CD4-positive, alpha-beta memory T cell (primary cell): ENCODE measurements at regions of chr18 and their contacts with region 1.

Region 1: GRCh38 chr18:61901323-61901986 is 8.6 kb upstream of the RNF152 start:
- DNase-seq: peak; percentile 35 to 49 (median 43)
- H3K4me3 ChIP-seq: no peak overlapping the region
- H3K4me3 Mint-ChIP-seq: no peak overlapping the region
- H3K27ac ChIP-seq: no peak overlapping the region
- H3K27ac Mint-ChIP-seq: no peak overlapping the region
- H3K4me1 ChIP-seq: no peaks in the 10 kb centered on the region
- H3K4me1 Mint-ChIP-seq: peaks cover 0 to 5% (median 2%) of the 10 kb centered on the region in 4 donors
- H3K27me3 ChIP-seq: no peaks in the 10 kb centered on the region
- H3K27me3 Mint-ChIP-seq: peaks cover 16% of the 10 kb centered on the region in 2 donors

Region 2: DNA sequence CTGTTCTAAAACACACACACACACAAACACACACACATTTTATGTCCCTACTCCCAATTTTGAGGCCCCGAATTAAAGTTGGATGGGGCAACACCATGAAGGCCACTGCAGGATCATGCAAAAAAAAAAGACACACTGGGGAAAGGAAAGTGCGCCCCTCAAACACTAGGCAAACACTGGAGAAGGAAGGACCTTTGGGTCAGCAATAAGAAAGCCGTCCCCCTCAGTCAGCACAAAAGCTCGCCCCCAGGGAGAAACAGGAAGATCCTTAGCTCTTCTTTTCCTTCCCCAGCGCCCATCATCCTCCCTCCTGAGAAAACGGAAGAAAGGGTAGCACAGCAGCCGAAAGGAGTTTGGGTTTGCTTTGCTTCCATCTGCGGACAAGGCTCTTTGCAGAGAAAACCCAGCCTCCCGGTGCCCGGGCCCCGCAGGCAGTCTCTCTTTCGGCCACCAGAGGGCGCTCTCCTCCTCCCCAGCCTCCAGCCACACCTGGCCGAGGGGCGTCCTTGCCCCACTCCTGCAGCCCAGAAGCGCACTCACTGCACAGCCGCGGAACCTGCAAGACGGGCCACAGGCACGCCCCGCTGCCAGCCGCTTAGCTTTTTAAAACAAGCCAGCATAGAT is 319.8 kb before region 1 on chr18:
- CTCF ChIA-PET with region 1: no interaction called
- POLR2A ChIA-PET with region 1: no interaction called
- intact Hi-C with region 1: loop called (anchors 2 kb)
- DNase-seq: peak; percentile 47 to 62 (median 50)
- H3K4me3 ChIP-seq: no peak overlapping the region
- H3K4me3 Mint-ChIP-seq: peak overlapping the region in 5 of 8 donors; percentile 13 to 63 (median 37)
- H3K27ac ChIP-seq: no peak overlapping the region
- H3K27ac Mint-ChIP-seq: peak overlapping the region in 2 of 7 donors; percentile 17 to 53
- H3K4me1 ChIP-seq: peaks cover 6% of the 10 kb centered on the region
- H3K4me1 Mint-ChIP-seq: peaks cover 5 to 24% (median 9%) of the 10 kb centered on the region in 4 donors
- H3K27me3 ChIP-seq: no peaks in the 10 kb centered on the region
- H3K27me3 Mint-ChIP-seq: peaks cover 34 to 42% of the 10 kb centered on the region in 2 donors

Region 3: DNA sequence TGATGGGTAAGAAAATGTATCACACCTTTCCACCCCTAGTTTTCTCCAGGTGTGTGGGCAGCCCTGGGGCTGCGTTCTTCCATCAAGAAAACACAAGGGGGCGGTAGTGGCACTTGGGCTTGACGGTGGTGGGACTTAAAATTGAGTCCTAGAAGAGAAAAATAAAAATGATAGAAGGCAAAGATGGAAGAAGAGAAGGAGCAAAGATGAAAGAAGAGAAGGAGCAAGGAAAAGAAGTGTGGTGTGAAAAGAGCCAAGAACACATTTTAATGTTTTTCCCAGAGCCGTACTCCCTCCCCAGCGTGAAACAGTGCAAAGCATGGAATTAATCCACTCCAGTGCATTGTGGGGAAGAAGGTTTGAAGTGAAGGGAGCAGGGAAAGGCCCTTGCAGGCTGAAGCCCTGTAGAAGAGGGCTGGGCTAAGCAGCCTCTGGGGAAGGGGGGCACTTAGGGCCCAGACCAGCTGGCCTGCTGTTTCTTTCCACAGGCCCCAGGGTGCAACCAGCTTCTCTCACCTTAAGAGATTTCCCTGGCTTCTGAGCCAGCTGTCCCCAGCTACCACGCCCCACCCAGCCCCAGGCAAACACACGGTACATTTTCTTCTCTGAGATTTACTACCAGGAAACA is 265.4 kb before region 1 on chr18:
- CTCF ChIA-PET with region 1: interaction called, 5 read pairs
- POLR2A ChIA-PET with region 1: no interaction called
- intact Hi-C with region 1: loop called (anchors 1 kb)
- DNase-seq: peak in 4 of 5 donors; percentile 26 to 41 (median 34)
- H3K4me3 ChIP-seq: no peak overlapping the region
- H3K4me3 Mint-ChIP-seq: no peak overlapping the region
- H3K27ac ChIP-seq: no peak overlapping the region
- H3K27ac Mint-ChIP-seq: no peak overlapping the region
- H3K4me1 ChIP-seq: no peaks in the 10 kb centered on the region
- H3K4me1 Mint-ChIP-seq: peaks cover 0 to 2% (median 0%) of the 10 kb centered on the region in 4 donors
- H3K27me3 ChIP-seq: peaks cover 3% of the 10 kb centered on the region
- H3K27me3 Mint-ChIP-seq: peaks cover 4 to 7% of the 10 kb centered on the region in 2 donors

Region 4: GRCh38 chr18:61817086-61817485 is 84.4 kb before region 1 on chr18:
- CTCF ChIA-PET with region 1: no interaction called
- POLR2A ChIA-PET with region 1: no interaction called
- intact Hi-C with region 1: no loop called
- DNase-seq: no peak
- H3K4me3 ChIP-seq: no peak overlapping the region
- H3K4me3 Mint-ChIP-seq: no peak overlapping the region
- H3K27ac ChIP-seq: no peak overlapping the region
- H3K27ac Mint-ChIP-seq: no peak overlapping the region
- H3K4me1 ChIP-seq: no peaks in the 10 kb centered on the region
- H3K4me1 Mint-ChIP-seq: no peaks in the 10 kb centered on the region
- H3K27me3 ChIP-seq: no peaks in the 10 kb centered on the region
- H3K27me3 Mint-ChIP-seq: peaks cover 0 to 4% of the 10 kb centered on the region in 2 donors